PC-9 (cell line): ENCODE measurements at regions of chr13 and their contacts with region 1.

Region 1: GRCh38 chr13:89988206-89988605 is 1359.3 kb upstream of the MIR17HG start:
- DNase-seq: no peak
- H3K4me3 ChIP-seq: no peak overlapping the region
- H3K27ac ChIP-seq: no peak overlapping the region
- H3K4me1 ChIP-seq: no peaks in the 10 kb centered on the region
- H3K27me3 ChIP-seq: no peaks in the 10 kb centered on the region
- CTCF ChIP-seq: no peak

Region 2: GRCh38 chr13:90276216-90276615 is 288.0 kb after region 1 on chr13:
- CTCF ChIA-PET with region 1: interaction called, 15 read pairs
- POLR2A ChIA-PET with region 1: no interaction called
- intact Hi-C with region 1: no loop called
- DNase-seq: no peak
- H3K4me3 ChIP-seq: no peak overlapping the region
- H3K27ac ChIP-seq: no peak overlapping the region
- H3K4me1 ChIP-seq: no peaks in the 10 kb centered on the region
- H3K27me3 ChIP-seq: no peaks in the 10 kb centered on the region
- CTCF ChIP-seq: no peak